CD4-positive, alpha-beta T cell (primary cell): ENCODE measurements at regions of chr17 and their contacts with region 1.

Region 1: GRCh38 chr17:75904749-75905521 is at the start of gene MRPL38:
- DNase-seq: peak; percentile 82 to 97 (median 92)
- ATAC-seq: peak; percentile 95
- H3K4me3 ChIP-seq: peak within 1 kb of the TSS; percentile 82
- H3K4me3 Mint-ChIP-seq: peak within 1 kb of the TSS; percentile 94
- H3K27ac ChIP-seq: peak within 1 kb of the TSS; percentile 73 to 76
- H3K27ac Mint-ChIP-seq: peak within 1 kb of the TSS; percentile 85
- H3K4me1 ChIP-seq: peaks cover 25% of the 10 kb centered on the region
- H3K4me1 Mint-ChIP-seq: no peaks in the 10 kb centered on the region
- H3K27me3 ChIP-seq: no peaks in the 10 kb centered on the region
- H3K27me3 Mint-ChIP-seq: no peaks in the 10 kb centered on the region
- CTCF ChIP-seq: peak; percentile 99
- total RNA-seq, gene MRPL38: 146 to 147 TPM

Region 2: DNA sequence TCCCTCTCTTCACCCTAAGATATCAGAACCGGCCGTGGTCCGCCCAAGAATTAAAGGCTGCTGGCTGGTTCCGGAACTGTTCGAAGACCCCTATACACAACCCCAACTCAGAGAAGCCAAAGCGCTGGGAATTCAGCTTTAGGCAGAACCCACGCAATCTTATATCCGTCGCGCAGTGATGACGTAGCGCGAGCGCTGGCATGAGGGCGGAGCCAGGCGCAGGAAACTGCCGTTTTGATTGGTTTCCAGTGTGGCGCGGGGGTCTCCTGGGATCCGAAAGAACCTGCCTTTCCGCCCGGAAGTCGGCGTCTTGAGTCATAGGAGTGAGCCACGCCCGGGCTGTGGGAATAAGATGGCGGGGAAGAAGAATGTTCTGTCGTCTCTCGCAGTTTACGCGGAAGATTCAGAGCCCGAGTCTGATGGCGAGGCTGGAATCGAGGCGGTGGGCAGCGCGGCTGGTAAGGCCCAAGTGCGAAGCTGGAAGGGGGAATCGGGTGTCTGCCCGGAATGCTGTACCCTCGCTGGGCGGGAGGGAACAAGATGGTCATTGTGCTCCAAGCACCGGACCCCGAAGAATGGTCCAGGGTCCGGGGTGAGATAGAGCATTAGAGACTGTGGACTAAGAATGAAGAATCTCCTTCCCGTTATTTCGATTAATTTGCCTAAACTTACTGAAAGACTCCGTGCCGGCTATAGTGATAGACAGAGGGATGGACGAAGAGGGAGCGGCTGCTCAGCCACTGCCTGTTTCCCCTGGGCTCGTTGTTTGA is 237.7 kb before region 1 on chr17 and contains the starts of genes RECQL5 and SAP30BP:
- CTCF ChIA-PET with region 1: no interaction called
- POLR2A ChIA-PET with region 1: no interaction called
- intact Hi-C with region 1: loop called in 1 of 2 experiments (anchors 10 kb)
- DNase-seq: peak; percentile 97 to 99 (median 98)
- ATAC-seq: peak; percentile 100
- H3K4me3 ChIP-seq: peak within 1 kb of the TSS; percentile 76
- H3K4me3 Mint-ChIP-seq: peak within 1 kb of the TSS; percentile 72
- H3K27ac ChIP-seq: peak within 1 kb of the TSS; percentile 87 to 90
- H3K27ac Mint-ChIP-seq: peak within 1 kb of the TSS; percentile 57
- H3K4me1 ChIP-seq: peaks cover 23% of the 10 kb centered on the region
- H3K4me1 Mint-ChIP-seq: peaks cover 26% of the 10 kb centered on the region
- H3K27me3 ChIP-seq: no peaks in the 10 kb centered on the region
- H3K27me3 Mint-ChIP-seq: no peaks in the 10 kb centered on the region
- CTCF ChIP-seq: no peak
- total RNA-seq, gene RECQL5: 16.4 to 17.7 TPM
- total RNA-seq, gene SAP30BP: 209 to 227 TPM

Region 3: DNA sequence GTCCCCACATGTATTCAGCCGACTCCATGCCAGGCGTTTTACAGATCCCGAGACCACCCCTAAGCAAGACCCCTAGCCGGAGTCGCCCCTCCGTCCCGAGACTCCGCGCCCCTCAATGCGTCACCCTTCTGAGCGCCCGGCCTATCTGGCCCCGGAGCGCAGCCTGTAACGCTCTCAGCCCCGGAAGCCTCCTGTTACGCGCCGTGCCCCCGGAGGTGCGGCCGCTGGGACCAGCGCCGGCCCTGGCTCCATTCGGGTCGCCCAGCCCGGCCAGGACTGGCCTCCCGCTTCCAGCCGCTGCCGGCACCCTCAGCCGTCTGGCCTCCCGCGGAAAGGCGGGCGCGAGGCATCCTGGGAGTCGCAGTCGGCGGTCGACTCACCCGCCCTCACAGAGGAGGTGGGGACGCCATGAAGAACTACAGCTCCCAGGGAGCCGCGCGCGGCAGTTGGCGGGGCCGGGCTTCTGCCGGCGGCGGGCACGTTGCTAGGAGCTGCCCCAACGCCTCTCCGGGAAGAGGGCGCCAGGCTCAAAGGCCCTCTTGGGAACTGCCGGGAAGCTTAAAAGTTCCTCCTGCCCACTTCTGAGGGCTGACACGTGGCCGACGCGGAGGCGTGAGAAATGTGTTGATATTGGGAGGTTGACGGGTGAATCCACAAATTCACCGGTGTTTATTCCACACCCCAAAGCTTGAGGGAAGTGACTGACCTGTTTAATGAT is 35.9 kb after region 1 on chr17 and contains the start of gene FBF1:
- CTCF ChIA-PET with region 1: no interaction called
- POLR2A ChIA-PET with region 1: interaction called, 6 read pairs
- intact Hi-C with region 1: loop called in 1 of 2 experiments (anchors 1 kb)
- DNase-seq: peak; percentile 73 to 92 (median 84)
- ATAC-seq: peak; percentile 100
- H3K4me3 ChIP-seq: peak within 1 kb of the TSS; percentile 84
- H3K4me3 Mint-ChIP-seq: peak within 1 kb of the TSS; percentile 92
- H3K27ac ChIP-seq: peak within 1 kb of the TSS in 1 of 2 donors; percentile 82
- H3K27ac Mint-ChIP-seq: peak within 1 kb of the TSS; percentile 81
- H3K4me1 ChIP-seq: peaks cover 15% of the 10 kb centered on the region
- H3K4me1 Mint-ChIP-seq: peaks cover 18% of the 10 kb centered on the region
- H3K27me3 ChIP-seq: no peaks in the 10 kb centered on the region
- H3K27me3 Mint-ChIP-seq: no peaks in the 10 kb centered on the region
- CTCF ChIP-seq: no peak
- total RNA-seq, gene FBF1: 21.2 to 23.9 TPM

Region 4: GRCh38 chr17:76005263-76006149 is 100.6 kb after region 1 on chr17:
- CTCF ChIA-PET with region 1: interaction called, 13 read pairs
- POLR2A ChIA-PET with region 1: interaction called, 4 read pairs
- intact Hi-C with region 1: loop called (anchors 1 kb)
- DNase-seq: peak; percentile 63 to 90 (median 78)
- ATAC-seq: peak; percentile 55
- H3K4me3 ChIP-seq: no peak overlapping the region
- H3K4me3 Mint-ChIP-seq: no peak overlapping the region
- H3K27ac ChIP-seq: no peak overlapping the region
- H3K27ac Mint-ChIP-seq: no peak overlapping the region
- H3K4me1 ChIP-seq: no peaks in the 10 kb centered on the region
- H3K4me1 Mint-ChIP-seq: no peaks in the 10 kb centered on the region
- H3K27me3 ChIP-seq: no peaks in the 10 kb centered on the region
- H3K27me3 Mint-ChIP-seq: no peaks in the 10 kb centered on the region
- CTCF ChIP-seq: peak; percentile 77

Region 5: DNA sequence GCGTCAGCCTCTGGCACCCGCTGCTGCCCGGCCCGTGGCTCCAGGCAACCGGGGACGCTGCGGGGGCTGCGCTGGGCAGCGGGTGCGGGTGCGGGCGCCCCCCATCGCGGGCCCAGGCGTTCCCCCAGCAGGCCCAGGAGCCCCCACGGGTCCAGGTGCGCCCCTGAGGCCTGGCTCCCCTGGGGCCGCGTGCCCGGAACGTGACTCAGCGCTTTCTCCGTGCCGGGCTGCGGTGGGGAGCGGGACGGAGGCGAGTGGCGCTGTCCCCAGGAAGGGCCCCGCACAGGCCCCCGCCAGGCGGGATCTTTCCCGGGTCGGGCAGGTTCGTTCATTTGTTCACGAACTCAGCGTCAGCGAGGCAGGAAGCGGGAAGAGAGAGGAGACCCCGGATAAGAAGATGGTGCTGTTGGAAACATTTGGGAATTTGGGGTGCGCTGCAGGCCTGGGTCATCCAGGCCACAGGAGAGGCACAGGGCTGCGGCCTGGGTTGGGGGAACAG is 217.0 kb after region 1 on chr17:
- CTCF ChIA-PET with region 1: no interaction called
- POLR2A ChIA-PET with region 1: no interaction called
- intact Hi-C with region 1: no loop called
- DNase-seq: peak in 3 of 14 experiments; percentile 21 to 49 (median 41)
- ATAC-seq: peak; percentile 12
- H3K4me3 ChIP-seq: peak overlapping the region; percentile 52
- H3K4me3 Mint-ChIP-seq: no peak overlapping the region
- H3K27ac ChIP-seq: no peak overlapping the region
- H3K27ac Mint-ChIP-seq: peak overlapping the region; percentile 42
- H3K4me1 ChIP-seq: peaks cover 31% of the 10 kb centered on the region
- H3K4me1 Mint-ChIP-seq: peaks cover 17% of the 10 kb centered on the region
- H3K27me3 ChIP-seq: no peaks in the 10 kb centered on the region
- H3K27me3 Mint-ChIP-seq: no peaks in the 10 kb centered on the region
- CTCF ChIP-seq: no peak

Region 6: GRCh38 chr17:76278952-76279741 is 374.2 kb after region 1 on chr17:
- CTCF ChIA-PET with region 1: no interaction called
- POLR2A ChIA-PET with region 1: no interaction called
- intact Hi-C with region 1: loop called in 1 of 2 experiments (anchors 5 kb)
- DNase-seq: peak; percentile 74 to 91 (median 84)
- ATAC-seq: peak; percentile 89
- H3K4me3 ChIP-seq: no peak overlapping the region
- H3K4me3 Mint-ChIP-seq: no peak overlapping the region
- H3K27ac ChIP-seq: no peak overlapping the region
- H3K27ac Mint-ChIP-seq: no peak overlapping the region
- H3K4me1 ChIP-seq: peaks cover 31% of the 10 kb centered on the region
- H3K4me1 Mint-ChIP-seq: peaks cover 13% of the 10 kb centered on the region
- H3K27me3 ChIP-seq: no peaks in the 10 kb centered on the region
- H3K27me3 Mint-ChIP-seq: no peaks in the 10 kb centered on the region
- CTCF ChIP-seq: peak; percentile 98